ENCODE measurements at regions of chr17 and their contacts with region 1.

Region 1: GRCh38 chr17:73304971-73305812 is 6.6 kb downstream of the CDC42EP4 start:
- DNase-seq: peak; percentile 65 to 87 (median 68)
- ATAC-seq: peak; percentile 69
- H3K4me3 ChIP-seq: peak overlapping the region; percentile 25
- H3K27ac ChIP-seq: peak overlapping the region; percentile 81
- H3K4me1 ChIP-seq: peaks cover 51% of the 10 kb centered on the region in 2 experiments
- H3K27me3 ChIP-seq: no peaks in the 10 kb centered on the region
- CTCF ChIP-seq: peak; percentile 47 to 56 (median 54); a peak in 4 of 6 replicates
- EP300 ChIP-seq: peak; percentile 65; the same call in 1 of the 2 replicates
- POLR2A ChIP-seq: peak; percentile 65
- RAD21 ChIP-seq: peak; percentile 34 to 65

Region 2: DNA sequence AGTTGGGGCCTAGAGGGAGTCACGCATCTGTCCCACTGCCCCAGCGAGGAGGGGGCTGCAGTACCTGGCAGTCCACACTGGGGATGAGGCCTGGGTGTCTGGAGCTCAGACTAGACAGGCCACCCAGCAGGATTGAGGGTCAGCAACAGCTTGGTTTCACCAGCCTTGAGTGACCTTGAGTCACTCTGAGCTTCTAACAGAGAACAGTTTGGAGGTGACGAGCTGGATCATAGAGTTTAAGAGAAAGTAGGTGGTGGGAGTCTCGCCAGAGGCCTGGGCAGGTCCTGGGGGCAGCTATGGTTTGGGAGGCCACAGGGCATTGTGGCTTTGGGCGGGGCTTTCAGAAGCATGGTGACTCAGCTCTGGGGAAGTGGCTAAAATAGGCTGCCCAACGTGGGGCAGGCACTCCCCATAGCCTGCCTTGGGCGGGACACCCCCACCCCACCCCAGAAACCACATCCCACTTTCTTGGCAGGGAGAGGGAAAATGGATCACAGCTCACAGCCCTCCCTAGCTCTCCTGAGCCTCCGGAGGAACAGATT is 13.9 kb before region 1 on chr17:
- CTCF ChIA-PET with region 1: no interaction called
- POLR2A ChIA-PET with region 1: interaction called, 7 read pairs
- in situ Hi-C with region 1: no loop called
- intact Hi-C with region 1: loop called (anchors 2 kb)
- DNase-seq: peak; percentile 70 to 82 (median 76)
- ATAC-seq: peak; percentile 85
- H3K4me3 ChIP-seq: no peak overlapping the region
- H3K27ac ChIP-seq: peak overlapping the region; percentile 80
- H3K4me1 ChIP-seq: peaks cover 40 to 45% of the 10 kb centered on the region in 2 experiments
- H3K27me3 ChIP-seq: no peaks in the 10 kb centered on the region
- CTCF ChIP-seq: no peak
- EP300 ChIP-seq: no peak; the same call in 1 of the 2 replicates
- POLR2A ChIP-seq: no peak
- RAD21 ChIP-seq: no peak

Region 3: GRCh38 chr17:73371285-73371684 is 66.1 kb after region 1 on chr17:
- CTCF ChIA-PET with region 1: interaction called, 14 read pairs
- POLR2A ChIA-PET with region 1: interaction called, 3 read pairs
- in situ Hi-C with region 1: no loop called
- intact Hi-C with region 1: loop called (anchors 2 kb)
- DNase-seq: no peak
- ATAC-seq: no peak
- H3K4me3 ChIP-seq: no peak overlapping the region
- H3K27ac ChIP-seq: no peak overlapping the region
- H3K4me1 ChIP-seq: peaks cover 2 to 9% of the 10 kb centered on the region in 2 experiments; a peak in 3 of 5 replicates
- H3K27me3 ChIP-seq: peaks cover 16 to 29% of the 10 kb centered on the region in 2 experiments
- CTCF ChIP-seq: no peak
- EP300 ChIP-seq: no peak
- POLR2A ChIP-seq: no peak
- RAD21 ChIP-seq: no peak

Region 4: GRCh38 chr17:73924501-73925186 is 619.5 kb after region 1 on chr17:
- CTCF ChIA-PET with region 1: no interaction called
- POLR2A ChIA-PET with region 1: no interaction called
- in situ Hi-C with region 1: no loop called
- intact Hi-C with region 1: no loop called
- DNase-seq: no peak
- ATAC-seq: no peak
- H3K4me3 ChIP-seq: no peak overlapping the region
- H3K27ac ChIP-seq: no peak overlapping the region
- H3K4me1 ChIP-seq: no peaks in the 10 kb centered on the region
- H3K27me3 ChIP-seq: no peaks in the 10 kb centered on the region
- CTCF ChIP-seq: no peak
- EP300 ChIP-seq: no peak
- POLR2A ChIP-seq: no peak
- RAD21 ChIP-seq: no peak